GM10248 (cell line): ENCODE measurements at regions of chr15 and their contacts with region 1.

Region 1: GRCh38 chr15:40338041-40338657 is 2.6 kb downstream of the CCDC9B start:
- DNase-seq: peak; percentile 91
- CTCF ChIP-seq: peak; percentile 92

Region 2: DNA sequence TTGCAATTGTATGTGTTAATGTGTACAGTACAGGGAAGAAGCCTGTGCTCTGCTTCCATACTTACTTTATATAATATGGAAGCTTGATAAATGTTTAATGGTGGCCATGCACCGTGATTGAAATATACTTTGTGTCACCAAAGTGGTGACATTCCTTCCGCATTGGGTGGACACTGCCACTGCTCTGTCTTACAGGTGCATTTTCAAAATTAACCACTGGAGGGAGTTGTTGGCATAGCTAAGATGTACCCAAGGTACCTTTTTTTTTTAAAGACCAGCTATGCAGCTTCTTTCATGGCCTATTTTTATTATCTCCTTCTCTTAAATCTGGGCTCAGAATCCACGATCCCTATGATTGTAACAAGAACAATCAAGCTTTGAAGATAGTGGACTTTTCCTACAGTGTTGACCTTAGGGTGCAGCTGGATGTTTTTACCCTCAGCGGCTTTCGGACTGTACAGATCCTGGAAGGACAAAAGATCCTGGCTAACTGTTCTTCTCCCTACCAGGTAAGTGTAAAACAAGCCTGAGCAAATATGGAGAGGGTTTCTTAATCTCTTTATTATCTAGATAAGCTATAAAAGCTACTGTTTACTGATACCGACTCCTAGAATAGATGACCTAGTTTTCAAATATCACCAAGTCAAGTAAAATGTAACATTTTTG is 120.9 kb before region 1 on chr15:
- CTCF ChIA-PET with region 1: interaction called, 31 read pairs
- POLR2A ChIA-PET with region 1: no interaction called
- DNase-seq: peak; percentile 64
- CTCF ChIP-seq: peak; percentile 67

Region 3: DNA sequence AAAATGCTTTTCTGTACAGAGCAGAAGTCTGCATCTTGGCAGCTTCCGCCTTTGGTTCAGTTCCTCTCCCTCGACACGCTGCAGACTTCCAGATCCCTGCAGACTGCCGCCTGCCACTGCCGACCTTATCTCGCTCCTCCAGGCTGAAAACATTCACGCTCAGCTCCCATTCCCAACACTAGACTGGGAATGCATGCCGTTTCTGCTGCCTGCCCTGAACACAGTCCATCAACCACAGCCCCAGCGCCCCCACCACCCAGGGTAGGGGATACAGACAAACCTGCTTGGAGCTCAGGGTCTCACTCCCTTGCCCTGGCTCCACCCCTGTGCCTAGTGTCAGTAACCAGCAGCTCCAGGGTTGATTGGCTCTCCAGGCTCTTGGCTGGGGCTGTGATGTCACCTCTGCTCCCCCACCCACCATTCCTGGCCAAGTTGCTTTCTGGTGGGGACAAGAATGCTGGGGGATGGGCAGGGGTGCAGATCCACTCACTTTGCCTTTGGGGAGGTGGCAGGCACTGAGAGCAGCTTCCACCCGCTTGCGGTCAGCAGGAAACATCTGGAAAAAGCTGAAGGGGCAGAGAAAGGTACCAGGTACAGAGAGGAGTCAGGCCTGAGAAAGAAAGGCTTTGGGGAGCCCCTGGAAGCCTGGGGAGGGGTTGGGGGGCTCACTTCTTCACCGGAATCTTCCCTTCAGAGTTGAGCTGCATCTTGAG is 36.5 kb before region 1 on chr15:
- CTCF ChIA-PET with region 1: interaction called, 87 read pairs
- POLR2A ChIA-PET with region 1: no interaction called
- DNase-seq: no peak
- CTCF ChIP-seq: no peak

Region 4: DNA sequence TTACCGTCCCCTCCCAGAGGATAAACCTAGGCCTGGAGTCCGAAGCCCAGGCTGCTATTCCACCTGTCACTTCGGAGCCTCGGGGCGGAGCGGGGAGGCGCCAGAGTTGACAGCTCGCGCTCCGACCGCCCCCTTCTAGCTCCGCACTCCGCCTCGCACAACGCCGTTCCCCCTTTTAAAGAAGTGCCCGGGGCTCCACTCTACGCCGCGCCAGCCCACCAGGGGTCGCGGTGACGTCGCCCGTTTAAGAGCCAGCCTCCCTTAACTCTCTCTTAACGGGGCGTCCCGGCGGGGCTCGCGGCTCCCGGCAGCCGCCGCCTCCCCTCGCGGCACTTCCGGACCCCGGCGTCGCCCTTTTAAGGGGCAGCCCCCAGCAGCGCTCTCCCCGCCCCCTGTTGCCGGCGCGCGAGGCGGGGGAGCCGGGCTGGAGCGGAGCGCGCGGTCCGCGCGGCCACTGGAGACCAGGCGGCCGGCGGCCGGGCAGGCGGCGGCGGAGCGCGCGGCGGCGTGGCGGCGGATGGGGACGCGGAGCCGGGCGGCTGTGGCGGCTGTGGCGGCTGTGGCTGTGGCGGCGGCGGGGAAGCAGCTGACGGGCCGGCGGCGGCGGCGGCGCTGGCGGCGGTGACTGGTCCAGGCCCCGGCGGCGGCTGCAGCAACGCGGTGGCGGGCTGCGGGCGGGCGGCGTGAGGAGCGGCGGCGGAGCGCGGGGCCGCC is 14.8 kb before region 1 on chr15 and contains the start of gene INAFM2:
- CTCF ChIA-PET with region 1: interaction called, 222 read pairs
- POLR2A ChIA-PET with region 1: interaction called, 4 read pairs
- DNase-seq: peak; percentile 96
- CTCF ChIP-seq: peak; percentile 40

Region 5: GRCh38 chr15:40398413-40398873 is 60.3 kb after region 1 on chr15:
- CTCF ChIA-PET with region 1: interaction called, 53 read pairs
- POLR2A ChIA-PET with region 1: no interaction called
- DNase-seq: peak; percentile 48
- CTCF ChIP-seq: no peak

Region 6: GRCh38 chr15:40421246-40422157 is 83.4 kb after region 1 on chr15:
- CTCF ChIA-PET with region 1: interaction called, 125 read pairs
- POLR2A ChIA-PET with region 1: no interaction called
- DNase-seq: peak; percentile 91
- CTCF ChIP-seq: peak; percentile 94